ENCODE measurements at regions of chr16 and their contacts with region 1.

Region 1: GRCh38 chr16:30628627-30629540 is 18.7 kb upstream of the ZNF689 start:
- DNase-seq: no peak
- ATAC-seq: peak; percentile 97
- H3K4me3 ChIP-seq: no peak overlapping the region
- H3K27ac ChIP-seq: no peak overlapping the region
- H3K4me1 ChIP-seq: peaks cover 5% of the 10 kb centered on the region
- H3K27me3 ChIP-seq: no peaks in the 10 kb centered on the region
- CTCF ChIP-seq: peak; percentile 90 to 95 (median 93); a peak in 5 of 6 replicates
- EP300 ChIP-seq: no peak
- POLR2A ChIP-seq: no peak
- RAD21 ChIP-seq: peak; percentile 81

Region 2: DNA sequence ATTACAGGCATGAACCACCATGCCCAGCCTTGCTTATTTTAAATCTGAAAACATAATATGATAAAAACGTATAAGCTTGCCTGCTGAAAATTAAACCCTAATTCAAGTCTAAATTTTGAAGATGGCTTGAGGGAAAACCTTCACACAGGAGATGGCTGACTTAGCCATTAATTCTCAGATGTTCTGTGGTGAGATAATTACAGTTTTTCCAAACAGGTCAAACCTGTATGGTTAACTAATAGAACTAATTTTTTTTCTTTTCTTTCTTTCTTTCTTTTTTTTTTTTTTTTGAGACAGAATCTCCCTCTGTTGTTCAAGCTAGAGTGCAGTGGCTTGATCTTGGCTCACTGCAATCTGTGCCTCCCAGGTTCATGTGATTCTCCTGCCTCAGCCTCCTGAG is 162.1 kb before region 1 on chr16:
- CTCF ChIA-PET with region 1: no interaction called
- POLR2A ChIA-PET with region 1: no interaction called
- RAD21 ChIA-PET with region 1: no interaction called
- SMC1A ChIA-PET with region 1: no interaction called
- in situ Hi-C with region 1: no loop called
- intact Hi-C with region 1: no loop called
- DNase-seq: no peak
- ATAC-seq: no peak
- H3K4me3 ChIP-seq: no peak overlapping the region
- H3K27ac ChIP-seq: no peak overlapping the region
- H3K4me1 ChIP-seq: peaks cover 23% of the 10 kb centered on the region
- H3K27me3 ChIP-seq: no peaks in the 10 kb centered on the region
- CTCF ChIP-seq: no peak
- EP300 ChIP-seq: no peak
- POLR2A ChIP-seq: no peak
- RAD21 ChIP-seq: no peak

Region 3: GRCh38 chr16:30557957-30558788 is 70.7 kb before region 1 on chr16 and contains the start of gene ZNF764:
- CTCF ChIA-PET with region 1: interaction called, 11 read pairs
- POLR2A ChIA-PET with region 1: interaction called, 3 read pairs
- RAD21 ChIA-PET with region 1: interaction called, 7 read pairs
- SMC1A ChIA-PET with region 1: interaction called, 3 read pairs
- in situ Hi-C with region 1: no loop called
- intact Hi-C with region 1: no loop called
- DNase-seq: peak; percentile 84
- ATAC-seq: peak; percentile 96
- H3K4me3 ChIP-seq: peak within 1 kb of the TSS; percentile 87
- H3K27ac ChIP-seq: peak within 1 kb of the TSS; percentile 85
- H3K4me1 ChIP-seq: no peaks in the 10 kb centered on the region
- H3K27me3 ChIP-seq: no peaks in the 10 kb centered on the region
- CTCF ChIP-seq: peak; percentile 1 to 9 (median 2); a peak in 1 of 6 replicates
- EP300 ChIP-seq: no peak
- POLR2A ChIP-seq: peak; percentile 68
- RAD21 ChIP-seq: no peak
- polyA plus RNA-seq, gene ZNF764: 0.61 to 1.6 TPM

Region 4: GRCh38 chr16:30609926-30610839 is 18.7 kb before region 1 on chr16 and contains the start of gene ZNF689:
- CTCF ChIA-PET with region 1: interaction called, 57 read pairs
- POLR2A ChIA-PET with region 1: interaction called, 5 read pairs
- RAD21 ChIA-PET with region 1: interaction called, 6 read pairs
- SMC1A ChIA-PET with region 1: interaction called, 14 read pairs
- in situ Hi-C with region 1: no loop called
- intact Hi-C with region 1: no loop called
- DNase-seq: peak; percentile 93
- ATAC-seq: peak; percentile 91
- H3K4me3 ChIP-seq: peak within 1 kb of the TSS; percentile 98
- H3K27ac ChIP-seq: peak within 1 kb of the TSS; percentile 96
- H3K4me1 ChIP-seq: peaks cover 4% of the 10 kb centered on the region
- H3K27me3 ChIP-seq: no peaks in the 10 kb centered on the region
- CTCF ChIP-seq: no peak
- EP300 ChIP-seq: no peak
- POLR2A ChIP-seq: peak; percentile 74
- RAD21 ChIP-seq: no peak
- polyA plus RNA-seq, gene ZNF689: 4.7 to 6.3 TPM

Region 5: GRCh38 chr16:30615358-30616091 is 13.4 kb before region 1 on chr16:
- CTCF ChIA-PET with region 1: interaction called, 57 read pairs
- POLR2A ChIA-PET with region 1: interaction called, 5 read pairs
- RAD21 ChIA-PET with region 1: interaction called, 6 read pairs
- SMC1A ChIA-PET with region 1: interaction called, 14 read pairs
- in situ Hi-C with region 1: no loop called
- intact Hi-C with region 1: no loop called
- DNase-seq: no peak
- ATAC-seq: peak; percentile 82
- H3K4me3 ChIP-seq: no peak overlapping the region
- H3K27ac ChIP-seq: no peak overlapping the region
- H3K4me1 ChIP-seq: no peaks in the 10 kb centered on the region
- H3K27me3 ChIP-seq: no peaks in the 10 kb centered on the region
- CTCF ChIP-seq: peak; percentile 72 to 75 (median 74)
- EP300 ChIP-seq: no peak
- POLR2A ChIP-seq: no peak
- RAD21 ChIP-seq: peak; percentile 72

Region 6: DNA sequence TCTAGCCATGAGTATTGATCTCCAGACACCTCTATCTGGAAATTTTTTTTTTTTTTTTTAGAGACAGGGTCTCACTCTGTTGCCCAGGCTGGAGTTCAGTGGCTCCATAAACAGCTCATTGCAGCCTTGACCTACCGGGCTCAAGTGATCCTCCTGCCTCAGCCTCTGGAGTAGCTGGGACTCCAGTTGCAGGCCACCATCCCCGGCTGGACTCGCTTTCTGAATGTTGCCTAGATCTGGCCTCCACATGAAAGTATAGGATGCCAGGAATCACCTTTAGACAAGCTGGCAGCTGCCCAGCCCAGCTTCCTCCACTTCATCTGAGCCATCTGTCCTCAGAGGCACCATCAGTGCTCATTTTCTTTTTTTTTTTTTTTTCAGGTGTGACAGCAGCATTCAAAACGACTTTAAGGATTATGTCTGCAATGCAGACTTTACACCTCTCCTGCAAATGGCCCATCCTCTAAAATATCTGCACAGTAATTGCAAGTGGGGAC is 15.5 kb after region 1 on chr16:
- CTCF ChIA-PET with region 1: interaction called, 22 read pairs
- POLR2A ChIA-PET with region 1: interaction called, 10 read pairs
- RAD21 ChIA-PET with region 1: interaction called, 10 read pairs
- SMC1A ChIA-PET with region 1: interaction called, 6 read pairs
- in situ Hi-C with region 1: no loop called
- intact Hi-C with region 1: no loop called
- DNase-seq: no peak
- ATAC-seq: no peak
- H3K4me3 ChIP-seq: no peak overlapping the region
- H3K27ac ChIP-seq: no peak overlapping the region
- H3K4me1 ChIP-seq: no peaks in the 10 kb centered on the region
- H3K27me3 ChIP-seq: no peaks in the 10 kb centered on the region
- CTCF ChIP-seq: no peak
- EP300 ChIP-seq: no peak
- POLR2A ChIP-seq: no peak
- RAD21 ChIP-seq: no peak

Region 7: GRCh38 chr16:30692381-30693064 is 63.6 kb after region 1 on chr16:
- CTCF ChIA-PET with region 1: interaction called, 24 read pairs
- POLR2A ChIA-PET with region 1: no interaction called
- RAD21 ChIA-PET with region 1: interaction called, 7 read pairs
- SMC1A ChIA-PET with region 1: interaction called, 5 read pairs
- in situ Hi-C with region 1: no loop called
- intact Hi-C with region 1: no loop called
- DNase-seq: no peak
- ATAC-seq: no peak
- H3K4me3 ChIP-seq: no peak overlapping the region
- H3K27ac ChIP-seq: no peak overlapping the region
- H3K4me1 ChIP-seq: peaks cover 4% of the 10 kb centered on the region; the same call in 1 of the 2 replicates
- H3K27me3 ChIP-seq: no peaks in the 10 kb centered on the region
- CTCF ChIP-seq: no peak
- EP300 ChIP-seq: no peak
- POLR2A ChIP-seq: no peak
- RAD21 ChIP-seq: no peak

Measured in GM12878 (cell line).